BJ (cell line): ENCODE measurements at regions of chr10 and their contacts with region 1.

Region 1: DNA sequence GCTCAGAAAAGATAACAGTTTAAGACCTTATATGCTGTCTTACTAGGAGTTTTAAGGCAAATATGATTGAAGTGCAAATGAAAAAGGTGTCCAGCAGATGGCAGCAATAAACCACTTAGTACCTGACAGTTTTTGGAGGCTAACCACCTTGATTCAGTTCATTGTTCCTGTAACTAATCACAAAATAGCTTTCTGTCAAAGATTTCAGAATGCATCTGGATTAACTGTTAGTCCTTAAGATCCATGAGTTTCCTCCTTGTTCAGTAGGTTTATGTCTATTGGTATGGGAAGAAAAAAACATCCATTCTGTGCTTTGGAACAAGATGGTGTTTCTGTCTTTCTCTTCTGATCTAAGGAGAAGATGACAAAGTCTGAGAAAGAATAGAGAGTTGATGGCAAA is 46.6 kb downstream of the CCSER2 start:
- DNase-seq: peak; percentile 12
- H3K4me3 ChIP-seq: no peak overlapping the region
- H3K27me3 ChIP-seq: no peaks in the 10 kb centered on the region
- CTCF ChIP-seq: peak; percentile 62

Region 2: GRCh38 chr10:84391326-84391725 is 16.3 kb after region 1 on chr10:
- CTCF ChIA-PET with region 1: no interaction called
- POLR2A ChIA-PET with region 1: no interaction called
- DNase-seq: no peak
- H3K4me3 ChIP-seq: no peak overlapping the region
- H3K27me3 ChIP-seq: no peaks in the 10 kb centered on the region
- CTCF ChIP-seq: no peak

Region 3: DNA sequence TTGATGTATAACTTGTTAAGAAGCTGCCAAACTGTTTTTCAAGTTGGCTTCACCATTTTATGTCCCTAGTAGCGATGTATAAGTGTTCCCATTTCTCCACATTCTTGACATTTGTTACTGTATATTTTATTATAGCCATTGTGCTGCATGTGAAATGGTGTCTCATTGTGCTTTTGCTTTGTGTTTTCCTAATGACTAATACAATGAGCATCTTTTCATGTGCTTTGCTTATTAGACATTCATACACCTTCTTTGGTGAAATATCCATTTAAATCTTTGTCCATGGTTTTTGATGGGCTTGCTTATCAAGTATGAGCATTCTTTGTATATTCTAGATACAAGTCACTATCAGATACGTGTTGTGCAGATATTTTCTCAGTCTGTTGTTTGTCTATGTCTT is 156.4 kb after region 1 on chr10:
- CTCF ChIA-PET with region 1: interaction called, 106 read pairs
- POLR2A ChIA-PET with region 1: no interaction called
- DNase-seq: no peak
- H3K4me3 ChIP-seq: no peak overlapping the region
- H3K27me3 ChIP-seq: no peaks in the 10 kb centered on the region
- CTCF ChIP-seq: no peak